Activated CD4-positive, alpha-beta T cell treated with anti-CD3 and anti-CD28 coated beads, Interleukin-2, amount 10 ng/mL, durations not matched to agents 24 days and 14 days (primary cell): ENCODE measurements at regions of chr1 and their contacts with region 1.

Region 1: DNA sequence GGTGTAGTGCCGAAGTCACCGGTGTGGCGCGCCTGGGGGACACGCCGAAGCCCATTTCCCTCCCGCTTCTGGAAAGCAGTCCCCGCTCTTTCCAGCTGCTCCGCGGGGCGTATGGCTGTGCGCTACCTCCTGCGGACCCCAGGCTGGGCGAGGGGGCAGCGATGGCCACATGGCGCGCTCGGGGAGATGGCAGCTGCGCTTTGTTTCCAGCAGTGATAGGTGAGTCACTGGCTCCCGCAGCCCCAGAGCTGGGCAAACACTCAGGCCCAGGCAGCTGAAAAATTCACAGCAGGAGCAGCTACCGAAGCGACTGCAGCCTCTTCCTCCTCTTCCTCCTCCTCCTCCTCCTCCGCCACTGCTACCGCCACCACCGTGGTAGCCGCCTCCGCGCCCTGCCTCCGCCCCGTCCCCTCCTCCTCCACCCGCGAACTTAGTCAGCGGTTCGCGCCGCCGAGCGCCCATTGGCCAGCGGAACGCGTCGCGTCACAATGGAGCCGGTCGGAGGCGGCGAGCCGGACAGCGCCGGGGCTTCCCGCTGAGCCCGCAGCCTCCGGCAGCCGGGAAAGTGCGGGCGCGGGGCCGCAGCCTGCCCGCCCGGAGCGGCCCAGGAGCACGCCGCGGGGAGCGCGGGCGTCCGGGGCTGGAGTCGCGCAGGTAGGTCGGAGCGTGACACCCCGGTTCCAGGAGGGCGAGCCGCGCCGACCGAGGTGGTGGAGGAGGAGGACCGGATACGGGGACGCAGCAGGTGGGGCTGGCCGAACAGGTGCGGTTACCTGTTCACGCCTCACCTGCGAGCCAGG is at the start of gene LRRC8B:
- DNase-seq: peak; percentile 98
- H3K4me3 Mint-ChIP-seq: no peak within 1 kb of the TSS
- H3K27ac Mint-ChIP-seq: peak within 1 kb of the TSS; percentile 95
- H3K4me1 Mint-ChIP-seq: peaks cover 34% of the 10 kb centered on the region
- H3K27me3 Mint-ChIP-seq: no peaks in the 10 kb centered on the region
- total RNA-seq, gene LRRC8B: 74.5 and 76.8 TPM in 2 replicates

Region 2: DNA sequence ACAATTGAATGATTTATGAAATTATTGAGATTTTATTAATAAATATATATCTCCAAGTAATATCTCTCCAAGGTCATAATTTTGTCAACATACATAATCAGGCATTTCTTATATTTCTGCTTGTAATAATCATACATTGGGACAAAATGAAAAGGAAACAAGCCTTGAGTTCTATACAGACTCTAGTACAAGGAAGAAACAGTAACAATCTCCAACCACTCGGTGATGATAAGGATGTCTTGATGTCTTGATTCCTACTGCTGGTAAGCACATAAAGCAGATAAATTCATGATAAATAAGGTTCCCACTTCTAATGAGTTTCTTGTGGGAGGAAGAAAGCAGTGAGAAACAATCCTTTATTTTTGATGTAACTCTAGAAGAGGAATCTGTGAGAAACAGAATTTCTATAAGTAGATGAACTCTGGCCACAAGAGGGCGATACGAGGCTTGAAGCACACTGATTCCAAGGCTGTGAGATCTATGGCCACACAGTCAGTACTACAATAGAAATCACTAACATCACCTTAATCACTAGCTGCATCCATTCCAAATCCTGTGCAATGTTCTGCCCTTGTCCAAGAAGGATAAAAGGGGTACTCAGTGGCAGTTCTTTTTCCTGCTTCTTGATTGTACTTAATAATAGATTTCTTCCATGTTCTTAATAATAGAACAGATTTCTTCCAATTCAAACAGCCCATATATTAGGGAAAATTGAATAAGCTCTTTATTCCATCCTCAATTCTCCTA is 41.4 kb before region 1 on chr1:
- intact Hi-C with region 1: loop called (anchors 2 kb)
- DNase-seq: peak; percentile 93
- H3K4me3 Mint-ChIP-seq: no peak overlapping the region
- H3K27ac Mint-ChIP-seq: no peak overlapping the region
- H3K4me1 Mint-ChIP-seq: peaks cover 21% of the 10 kb centered on the region
- H3K27me3 Mint-ChIP-seq: no peaks in the 10 kb centered on the region

Region 3: DNA sequence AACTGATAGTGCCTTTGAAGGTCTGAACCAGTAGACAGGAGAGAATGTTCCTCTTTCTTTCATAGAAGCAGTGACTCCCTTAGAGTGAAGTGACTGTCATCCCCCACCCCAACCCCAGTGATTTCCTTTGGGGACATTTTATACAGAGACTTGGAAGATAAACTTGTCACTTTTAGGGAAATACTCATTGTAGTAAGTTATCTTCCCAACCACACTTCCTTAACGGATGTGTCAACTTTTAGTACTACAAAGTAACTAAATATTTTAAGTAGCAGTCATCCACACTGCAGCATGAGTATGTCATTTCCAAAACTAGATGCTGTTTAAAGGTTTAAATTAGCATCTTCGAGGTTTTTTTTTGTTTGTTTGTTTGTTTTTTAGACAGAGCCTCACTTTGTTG is 13.8 kb after region 1 on chr1:
- intact Hi-C with region 1: loop called (anchors 1 kb)
- DNase-seq: peak; percentile 54
- H3K4me3 Mint-ChIP-seq: peak overlapping the region; percentile 39
- H3K27ac Mint-ChIP-seq: peak overlapping the region; percentile 80
- H3K4me1 Mint-ChIP-seq: peaks cover 54% of the 10 kb centered on the region
- H3K27me3 Mint-ChIP-seq: no peaks in the 10 kb centered on the region

Region 4: DNA sequence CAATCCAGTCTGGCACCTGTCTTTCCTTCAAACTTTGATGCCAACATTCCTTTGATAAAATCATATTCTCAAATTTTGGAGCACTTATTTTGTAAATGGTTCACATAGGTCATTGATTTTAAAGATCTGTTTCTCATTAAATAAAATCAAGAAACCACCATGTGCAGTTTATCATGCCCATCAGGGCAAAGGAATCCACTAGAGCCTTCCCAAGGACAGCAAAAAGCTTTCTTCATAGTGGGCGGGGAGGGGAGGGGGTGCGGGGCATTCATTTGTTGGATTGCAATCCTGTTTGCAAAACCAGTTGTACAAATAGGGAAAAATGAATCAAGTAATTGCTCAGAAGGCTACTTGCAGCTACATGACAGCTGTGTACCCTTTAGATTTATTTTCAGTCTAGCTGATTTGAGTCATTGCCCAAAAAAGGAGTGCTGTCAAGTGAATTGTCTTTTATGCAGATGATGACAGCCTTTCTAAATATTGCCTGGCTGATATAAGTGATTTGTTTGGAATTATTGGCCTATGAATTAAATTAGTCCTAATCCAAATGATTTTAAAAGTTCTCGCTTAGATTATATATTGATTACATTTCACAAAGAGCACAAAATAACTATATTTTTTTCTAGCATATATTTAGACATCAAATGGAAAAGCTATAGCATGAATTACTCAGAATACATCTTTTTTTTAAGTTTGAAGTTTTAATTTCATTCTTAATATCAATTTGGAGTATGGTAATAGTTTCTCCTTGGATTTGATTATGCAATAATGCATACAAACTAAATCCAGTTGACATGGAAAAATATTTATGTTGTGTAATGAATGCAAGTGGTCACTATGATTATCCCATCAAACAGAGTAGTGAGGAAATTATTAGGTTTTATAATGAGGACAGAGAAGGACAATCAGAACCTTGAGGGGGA is 23.3 kb after region 1 on chr1:
- intact Hi-C with region 1: loop called (anchors 1 kb)
- DNase-seq: peak; percentile 43
- H3K4me3 Mint-ChIP-seq: peak overlapping the region; percentile 28
- H3K27ac Mint-ChIP-seq: peak overlapping the region; percentile 92
- H3K4me1 Mint-ChIP-seq: peaks cover 78% of the 10 kb centered on the region
- H3K27me3 Mint-ChIP-seq: peaks cover 2% of the 10 kb centered on the region

Region 5: DNA sequence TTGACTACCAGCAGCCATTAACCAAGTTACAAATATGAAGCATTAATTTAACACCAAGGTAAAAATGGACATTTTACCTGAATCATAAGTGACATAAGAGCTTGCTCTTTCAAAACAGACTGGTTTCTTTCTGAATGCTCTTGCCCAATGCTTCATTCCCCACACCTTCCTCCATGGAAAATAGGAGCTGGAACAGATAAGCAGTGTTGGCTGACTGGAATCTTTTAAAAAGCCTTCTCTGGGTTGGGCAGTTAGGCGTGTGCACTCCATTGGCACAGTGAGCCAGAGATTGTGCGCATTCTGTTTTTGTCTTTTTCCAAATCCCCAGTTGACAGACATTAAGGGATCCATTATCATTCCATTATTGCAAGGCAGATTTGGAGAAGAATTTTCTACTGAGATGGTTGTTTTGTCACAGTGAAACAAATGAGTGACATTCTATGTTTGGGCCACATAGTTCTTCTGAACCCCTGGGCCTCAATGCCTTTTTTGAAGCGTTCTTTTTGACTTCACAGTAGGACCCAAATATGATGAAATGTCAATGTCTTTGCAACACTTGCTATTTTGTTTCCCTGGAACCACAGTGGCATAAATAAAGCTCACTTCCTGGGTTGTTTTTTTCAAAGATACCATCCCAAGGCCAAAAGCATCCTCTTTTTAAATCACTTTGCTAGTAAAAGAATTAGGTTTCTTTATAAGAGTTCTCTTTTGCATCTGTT is 32.3 kb after region 1 on chr1:
- intact Hi-C with region 1: loop called (anchors 5 kb)
- DNase-seq: no peak
- H3K4me3 Mint-ChIP-seq: peak overlapping the region; percentile 13
- H3K27ac Mint-ChIP-seq: peak overlapping the region; percentile 30
- H3K4me1 Mint-ChIP-seq: peaks cover 54% of the 10 kb centered on the region
- H3K27me3 Mint-ChIP-seq: no peaks in the 10 kb centered on the region

Region 6: GRCh38 chr1:89605692-89606091 is 81.1 kb after region 1 on chr1:
- intact Hi-C with region 1: loop called (anchors 1 kb)
- DNase-seq: no peak
- H3K4me3 Mint-ChIP-seq: peak overlapping the region; percentile 64
- H3K27ac Mint-ChIP-seq: peak overlapping the region; percentile 99
- H3K4me1 Mint-ChIP-seq: peaks cover 86% of the 10 kb centered on the region
- H3K27me3 Mint-ChIP-seq: no peaks in the 10 kb centered on the region

Region 7: DNA sequence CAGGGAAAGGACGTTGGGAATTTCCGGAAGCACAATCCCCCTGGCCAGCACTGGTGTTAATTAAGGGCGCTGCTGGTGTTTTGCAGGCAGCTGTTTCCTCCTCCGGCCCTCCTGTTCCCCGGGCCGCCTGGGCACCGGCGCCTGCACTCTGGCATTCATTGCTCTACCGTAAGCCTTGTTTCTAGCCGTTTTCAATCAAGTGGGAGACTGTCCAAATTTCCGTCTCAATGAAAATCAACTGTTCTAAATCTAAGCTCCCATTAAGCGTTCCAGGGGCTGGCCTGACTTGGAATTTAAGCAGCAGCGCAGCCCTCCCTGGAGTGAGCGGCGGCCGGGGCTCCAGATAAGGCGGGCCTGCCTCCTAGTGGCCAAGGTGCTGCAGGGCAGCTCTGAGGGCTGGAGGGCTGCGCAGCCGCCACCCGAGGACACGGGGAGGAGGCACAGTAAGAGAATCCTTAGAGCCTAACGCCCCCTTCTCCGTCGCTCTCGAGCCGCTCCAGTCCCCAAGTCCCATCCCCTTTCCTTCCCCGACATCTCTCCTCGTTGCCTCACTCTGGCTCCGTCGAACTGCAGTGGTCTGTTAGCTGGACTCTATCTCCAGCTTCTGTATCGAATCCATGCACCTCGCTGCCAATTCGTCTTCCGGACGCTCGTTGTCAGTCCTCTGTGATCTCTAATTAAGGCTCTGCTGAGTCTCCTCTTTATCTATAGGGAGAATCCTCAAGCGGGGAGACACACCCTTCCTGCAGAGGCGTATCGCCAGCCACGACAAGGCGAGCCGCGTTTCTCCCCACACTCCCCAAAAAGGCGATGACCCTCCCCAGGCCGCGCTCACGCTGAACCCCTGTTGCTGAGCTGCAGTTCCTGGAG is 238.4 kb after region 1 on chr1:
- intact Hi-C with region 1: loop called (anchors 2 kb)
- DNase-seq: peak; percentile 96
- H3K4me3 Mint-ChIP-seq: peak overlapping the region; percentile 91
- H3K27ac Mint-ChIP-seq: peak overlapping the region; percentile 96
- H3K4me1 Mint-ChIP-seq: peaks cover 53% of the 10 kb centered on the region
- H3K27me3 Mint-ChIP-seq: no peaks in the 10 kb centered on the region